G401 (cell line): ENCODE measurements at regions of chr20 and their contacts with region 1.

Region 1: DNA sequence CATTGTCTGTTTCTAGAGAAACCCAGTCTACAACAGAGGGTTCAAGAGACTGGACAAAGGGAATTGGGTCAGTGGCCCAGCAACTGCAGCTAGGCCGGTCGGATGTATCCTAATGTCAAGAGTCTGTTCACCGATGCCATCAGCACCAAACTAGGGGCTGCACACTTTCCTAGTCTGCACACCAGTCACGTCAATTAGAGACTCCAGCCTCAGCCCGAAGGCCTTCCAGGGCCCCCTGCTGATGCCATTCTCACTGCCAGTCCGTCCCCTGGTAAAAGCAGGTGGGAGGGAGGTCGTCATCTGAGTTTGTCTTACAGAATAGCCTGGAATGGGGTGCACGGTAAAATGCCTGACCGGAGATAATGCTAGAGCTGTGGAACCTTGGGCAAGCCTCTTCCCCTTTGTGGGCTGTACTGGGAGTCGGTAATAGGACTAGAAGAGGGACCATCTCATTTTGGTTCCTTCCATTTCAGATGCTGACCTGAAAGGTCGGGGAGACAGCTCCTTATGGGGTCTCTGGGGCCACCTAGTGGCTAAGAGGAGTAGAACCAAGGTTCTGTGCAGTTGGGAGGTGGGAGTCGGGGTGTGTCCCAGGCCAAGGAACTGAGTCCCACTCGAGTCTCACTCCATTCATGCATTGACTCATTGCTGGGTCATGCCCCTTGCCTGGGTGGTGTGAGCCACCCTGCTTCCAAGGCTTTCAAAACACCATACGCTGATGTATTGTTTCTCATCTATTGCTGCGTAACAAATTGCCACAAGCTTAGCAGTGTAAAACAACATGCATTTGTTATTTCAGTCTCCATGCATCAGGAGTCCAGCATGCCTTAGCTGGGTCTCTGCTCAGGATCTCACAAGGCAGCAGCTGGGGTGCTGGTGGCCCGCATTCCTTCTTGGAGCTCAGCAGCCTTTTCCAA is 5.1 kb downstream of the SOX12 start:
- DNase-seq: peak; percentile 85

Region 2: GRCh38 chr20:235891-236290 is 94.6 kb before region 1 on chr20:
- in situ Hi-C with region 1: loop called (anchors 5 kb)
- DNase-seq: peak; percentile 24

Region 3: DNA sequence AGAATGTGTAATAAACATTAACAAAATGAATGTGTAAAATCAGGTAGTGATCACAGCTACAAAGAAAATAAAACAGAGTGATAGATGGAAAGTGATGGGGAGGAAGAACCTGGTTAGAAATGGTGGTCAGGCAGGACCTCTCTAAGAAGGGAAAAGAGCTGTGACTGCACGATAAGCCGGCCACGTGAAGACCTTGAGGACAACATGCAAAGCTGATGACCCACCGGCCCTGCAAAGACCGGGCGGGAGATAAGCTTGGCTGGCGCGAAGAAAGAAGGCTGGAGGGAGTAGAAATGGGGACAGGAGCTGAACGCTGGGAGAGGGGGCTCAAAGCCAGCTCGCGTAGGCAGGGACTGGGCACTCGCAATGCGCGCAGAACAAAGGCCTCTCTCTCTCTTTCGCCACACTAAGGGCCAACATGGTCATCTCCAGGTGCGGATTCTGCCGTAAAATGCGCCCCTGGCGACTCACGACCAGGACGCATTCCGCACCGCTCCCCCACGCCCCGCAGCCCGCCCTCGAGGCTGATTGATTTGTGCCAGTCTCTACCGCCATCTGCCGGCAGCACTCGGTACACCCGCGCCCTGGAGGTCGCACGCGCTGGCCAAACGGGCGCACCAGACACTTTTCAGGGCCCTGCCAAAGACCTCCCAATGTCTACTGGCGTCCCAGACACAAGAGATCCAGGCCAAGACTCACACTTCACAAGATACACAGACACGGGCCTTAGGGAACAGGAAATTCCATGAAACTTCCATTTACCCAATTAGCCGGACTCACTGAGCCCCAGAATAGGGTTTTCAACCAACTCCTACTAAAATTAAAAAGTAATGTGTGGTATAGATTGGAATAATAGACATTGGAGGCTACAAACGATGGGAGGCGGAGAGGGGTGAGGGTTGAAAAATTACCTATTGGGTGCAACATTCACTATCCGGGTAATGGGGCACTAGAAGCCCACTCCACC is 63.6 kb before region 1 on chr20:
- in situ Hi-C with region 1: loop called (anchors 5 kb)
- DNase-seq: peak; percentile 83

Region 4: DNA sequence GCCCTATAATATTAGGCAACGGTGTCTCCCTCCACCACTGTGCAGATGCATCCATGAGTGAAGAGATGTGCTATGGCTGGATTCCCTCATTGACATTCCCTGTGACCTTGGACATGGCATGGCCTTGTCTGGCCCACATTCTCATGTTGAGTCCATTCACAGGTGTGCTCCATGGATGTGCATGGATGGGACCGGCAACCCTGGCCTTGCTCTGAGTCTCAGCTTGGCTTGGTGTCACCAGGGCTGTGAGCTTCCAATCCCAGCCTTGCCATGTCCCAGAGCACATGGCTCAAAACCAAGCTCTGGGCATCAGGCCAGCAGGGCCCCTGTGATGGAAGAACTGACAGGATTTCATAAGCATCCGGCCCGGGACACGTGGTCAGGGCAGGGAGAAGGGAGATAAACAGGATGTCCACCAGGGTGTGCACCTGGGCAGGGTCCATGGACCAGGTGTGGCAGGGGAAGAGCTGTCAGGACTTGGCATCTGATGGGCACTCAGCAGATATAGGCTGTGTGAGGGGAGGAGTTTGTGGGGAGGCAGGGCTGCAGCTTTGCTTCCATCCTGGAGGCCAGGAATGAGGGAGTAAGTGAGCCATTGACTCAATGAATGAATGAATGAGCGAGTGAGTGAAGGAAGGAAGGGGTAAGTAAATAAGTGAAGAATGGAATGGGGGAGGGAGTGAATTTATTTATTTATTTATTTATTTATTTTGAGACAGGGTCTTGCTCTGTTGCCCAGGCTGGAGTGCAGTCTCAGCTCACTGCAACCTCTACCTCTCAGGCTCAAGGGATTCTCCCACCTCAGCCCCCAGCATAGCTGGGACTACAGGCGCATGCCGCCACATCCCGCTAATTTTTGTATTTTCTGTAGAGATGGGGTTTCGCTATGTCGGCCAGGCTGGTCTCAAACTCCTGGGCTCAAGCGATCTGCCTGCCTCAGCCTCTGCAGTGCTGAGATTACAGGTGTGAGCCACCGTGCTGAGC is 32.1 kb after region 1 on chr20:
- in situ Hi-C with region 1: no loop called
- DNase-seq: peak; percentile 89

Region 5: GRCh38 chr20:381581-382290 is 51.2 kb after region 1 on chr20:
- in situ Hi-C with region 1: no loop called
- DNase-seq: peak; percentile 78